RWPE1 (cell line): ENCODE measurements at regions of chr15 and their contacts with region 1.

Region 1: DNA sequence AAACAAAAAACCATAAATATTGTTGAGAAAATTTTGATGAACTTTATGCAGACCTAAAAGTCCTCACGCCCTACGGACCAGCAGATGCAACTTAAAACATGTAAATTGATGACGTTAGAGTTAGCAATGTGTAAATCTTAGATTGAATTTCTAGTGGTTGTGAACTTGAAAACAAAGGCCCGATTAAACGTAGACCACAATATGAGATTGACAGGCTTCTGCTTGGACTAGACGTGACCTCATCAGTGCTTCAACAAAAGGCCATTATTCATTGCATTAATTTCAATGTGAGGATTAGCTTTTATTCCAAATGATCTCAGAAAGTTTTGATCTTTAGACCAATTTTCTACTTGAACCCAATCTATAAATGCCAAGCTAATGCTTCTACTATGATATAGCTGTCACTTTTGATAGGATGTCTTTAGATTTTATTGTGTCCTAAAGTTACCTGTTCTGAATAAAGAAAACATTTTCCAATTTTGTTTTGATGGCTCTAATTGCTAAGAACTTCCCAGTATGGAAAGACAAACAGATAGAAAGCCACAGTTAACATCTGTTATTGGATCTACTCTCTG is 55.4 kb upstream of the SPPL2A start:
- DNase-seq: no peak
- H3K27ac ChIP-seq: no peak overlapping the region
- CTCF ChIP-seq: no peak

Region 2: GRCh38 chr15:50803479-50804180 is 17.3 kb before region 1 on chr15:
- CTCF ChIA-PET with region 1: interaction called, 10 read pairs
- POLR2A ChIA-PET with region 1: no interaction called
- DNase-seq: no peak
- H3K27ac ChIP-seq: no peak overlapping the region
- CTCF ChIP-seq: no peak